Ovary (tissue), 10 donors: ENCODE measurements at regions of chr20 and their contacts with region 1.

Region 1: DNA sequence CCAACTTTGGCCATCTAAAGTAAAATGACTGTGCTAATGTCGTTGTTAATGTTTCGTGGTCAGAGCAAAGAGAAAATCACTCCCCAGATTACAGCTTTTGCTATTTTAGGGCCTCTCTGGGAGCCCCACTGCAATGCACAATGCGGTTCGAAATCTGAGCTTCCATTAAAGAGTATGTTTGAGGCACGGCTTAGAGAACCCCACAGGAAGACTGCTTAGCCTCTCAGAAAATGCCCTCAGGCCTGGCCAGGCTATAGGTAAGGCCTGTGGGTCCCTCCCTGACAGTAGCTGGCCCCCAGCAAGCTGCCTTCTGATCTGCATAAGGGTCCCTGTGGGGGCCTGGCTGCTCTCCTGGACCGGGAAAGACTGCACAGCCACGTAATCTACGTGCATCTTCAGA is 274.6 kb downstream of the PTPRT start:
- DNase-seq: no peak
- H3K4me3 ChIP-seq: no peak overlapping the region
- H3K27ac ChIP-seq: no peak overlapping the region
- H3K4me1 ChIP-seq: no peaks in the 10 kb centered on the region
- H3K27me3 ChIP-seq: no peaks in the 10 kb centered on the region
- CTCF ChIP-seq: no peak
- EP300 ChIP-seq: no peak
- POLR2A ChIP-seq: no peak

Region 2: GRCh38 chr20:42567409-42567808 is 347.7 kb before region 1 on chr20:
- intact Hi-C with region 1: loop called in 1 of 4 experiments (anchors 10 kb)
- DNase-seq: no peak
- H3K4me3 ChIP-seq: no peak overlapping the region
- H3K27ac ChIP-seq: no peak overlapping the region
- H3K4me1 ChIP-seq: no peaks in the 10 kb centered on the region
- H3K27me3 ChIP-seq: no peaks in the 10 kb centered on the region
- CTCF ChIP-seq: no peak
- EP300 ChIP-seq: no peak
- POLR2A ChIP-seq: no peak